ENCODE measurements at regions of chr17 and their contacts with region 1.

Region 1: DNA sequence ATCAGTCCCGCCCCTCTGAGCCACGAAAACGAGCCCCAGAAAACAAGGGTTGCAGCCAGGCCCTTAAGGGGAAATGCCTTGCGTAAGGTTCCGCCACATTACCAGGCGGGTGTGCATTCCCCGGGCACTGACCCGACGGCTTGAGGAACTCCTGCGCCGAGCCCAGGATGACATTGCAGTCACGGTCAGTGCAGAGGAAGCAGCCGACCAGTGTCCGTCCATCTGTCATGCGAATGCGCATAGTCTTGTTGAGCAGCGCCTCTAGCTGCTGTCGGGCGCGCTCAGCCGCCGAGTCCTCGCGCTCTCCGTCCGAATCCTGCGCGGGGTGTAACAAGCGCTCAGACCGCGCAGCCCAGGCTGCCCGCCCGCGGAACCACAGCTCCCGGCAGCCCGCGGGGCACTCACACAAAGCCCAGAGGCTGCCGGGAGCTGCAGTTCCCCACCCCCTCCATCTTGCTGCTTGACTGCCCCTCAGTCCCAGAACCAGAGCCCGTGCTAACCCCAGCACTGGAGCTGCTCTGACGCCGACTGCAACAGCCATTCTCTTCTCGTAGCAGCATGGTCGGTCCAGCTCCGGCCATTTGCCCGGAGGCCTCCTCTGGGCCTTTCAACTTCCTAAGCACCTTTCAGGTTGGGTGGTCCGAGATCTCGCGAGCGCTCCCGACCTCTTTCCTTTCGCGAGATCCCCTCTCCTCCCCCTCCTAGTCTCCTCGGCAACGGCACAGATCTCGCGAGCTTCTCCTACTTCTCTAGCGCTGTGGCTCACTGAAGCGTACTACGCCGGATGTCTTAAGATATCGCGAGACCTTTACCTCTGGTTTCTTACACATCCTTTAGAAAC is at the start of gene NAA38:
- DNase-seq: peak; percentile 97
- ATAC-seq: peak; percentile 91
- H3K4me3 Mint-ChIP-seq: no peak within 1 kb of the TSS
- H3K27ac Mint-ChIP-seq: no peak within 1 kb of the TSS
- H3K4me1 Mint-ChIP-seq: peaks cover 18% of the 10 kb centered on the region
- H3K27me3 Mint-ChIP-seq: no peaks in the 10 kb centered on the region
- total RNA-seq, gene NAA38: 64.7 to 79.8 TPM

Region 2: GRCh38 chr17:7583253-7584109 is 273.6 kb before region 1 on chr17 and contains the start of gene MPDU1:
- CTCF ChIA-PET with region 1: no interaction called
- POLR2A ChIA-PET with region 1: no interaction called
- intact Hi-C with region 1: loop called in 1 of 2 experiments (anchors 1 kb)
- DNase-seq: peak; percentile 98
- ATAC-seq: peak; percentile 77
- H3K4me3 Mint-ChIP-seq: peak within 1 kb of the TSS; percentile 82
- H3K27ac Mint-ChIP-seq: peak within 1 kb of the TSS; percentile 100
- H3K4me1 Mint-ChIP-seq: peaks cover 56% of the 10 kb centered on the region
- H3K27me3 Mint-ChIP-seq: no peaks in the 10 kb centered on the region
- total RNA-seq, gene MPDU1: 51.7 to 77.0 TPM

Region 3: DNA sequence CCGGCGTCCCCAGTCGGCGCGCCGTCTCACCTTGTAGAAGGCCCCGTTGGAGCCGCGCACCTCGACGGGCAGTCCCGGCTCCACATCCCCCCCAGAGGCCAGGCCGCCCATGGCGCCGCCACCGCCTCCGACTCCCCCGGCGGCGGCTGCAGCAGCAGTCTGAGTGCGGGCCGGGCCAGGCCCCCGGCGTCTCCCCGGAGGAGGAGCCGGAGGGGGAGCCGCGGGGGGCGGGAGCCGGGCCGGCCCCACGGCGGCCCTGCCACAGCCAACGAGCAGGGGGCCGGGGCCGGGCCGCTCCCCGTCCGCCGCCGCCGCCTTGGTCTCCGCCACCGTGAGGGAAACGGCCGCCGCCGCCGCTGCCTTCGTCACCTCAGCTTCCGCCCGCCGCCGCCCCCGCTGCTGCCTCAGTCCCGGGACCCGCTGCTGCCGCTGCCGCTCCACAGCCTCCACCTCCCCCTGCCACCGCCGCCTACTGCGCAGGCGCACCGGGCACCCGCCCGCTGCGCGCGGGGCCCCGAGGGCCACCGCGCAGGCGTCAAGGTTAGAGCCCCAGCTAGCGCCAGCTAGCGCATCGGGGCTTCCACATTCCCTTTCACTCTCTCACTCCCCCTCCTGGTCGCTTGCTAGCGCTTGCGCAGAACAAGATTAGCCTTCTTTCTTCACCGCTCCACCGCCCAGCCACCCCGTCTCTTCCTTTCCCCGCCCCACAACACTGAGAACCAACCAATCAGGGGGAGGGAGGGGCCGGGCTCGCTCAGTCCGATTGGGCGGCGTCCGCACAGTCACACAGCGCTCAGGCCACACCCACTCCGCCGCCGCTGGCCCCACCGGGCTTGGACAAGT is 242.5 kb before region 1 on chr17 and contains the start of gene FXR2:
- CTCF ChIA-PET with region 1: no interaction called
- POLR2A ChIA-PET with region 1: no interaction called
- intact Hi-C with region 1: loop called in 1 of 2 experiments (anchors 1 kb)
- DNase-seq: peak; percentile 100
- ATAC-seq: peak; percentile 95
- H3K4me3 Mint-ChIP-seq: peak within 1 kb of the TSS; percentile 85
- H3K27ac Mint-ChIP-seq: peak within 1 kb of the TSS; percentile 93
- H3K4me1 Mint-ChIP-seq: peaks cover 32% of the 10 kb centered on the region
- H3K27me3 Mint-ChIP-seq: no peaks in the 10 kb centered on the region
- total RNA-seq, gene FXR2: 35.6 to 50.2 TPM

Region 4: GRCh38 chr17:7809086-7809790 is 47.9 kb before region 1 on chr17:
- CTCF ChIA-PET with region 1: no interaction called
- POLR2A ChIA-PET with region 1: no interaction called
- intact Hi-C with region 1: no loop called
- DNase-seq: no peak
- ATAC-seq: no peak
- H3K4me3 Mint-ChIP-seq: no peak overlapping the region
- H3K27ac Mint-ChIP-seq: no peak overlapping the region
- H3K4me1 Mint-ChIP-seq: no peaks in the 10 kb centered on the region
- H3K27me3 Mint-ChIP-seq: peaks cover 3% of the 10 kb centered on the region

Region 5: DNA sequence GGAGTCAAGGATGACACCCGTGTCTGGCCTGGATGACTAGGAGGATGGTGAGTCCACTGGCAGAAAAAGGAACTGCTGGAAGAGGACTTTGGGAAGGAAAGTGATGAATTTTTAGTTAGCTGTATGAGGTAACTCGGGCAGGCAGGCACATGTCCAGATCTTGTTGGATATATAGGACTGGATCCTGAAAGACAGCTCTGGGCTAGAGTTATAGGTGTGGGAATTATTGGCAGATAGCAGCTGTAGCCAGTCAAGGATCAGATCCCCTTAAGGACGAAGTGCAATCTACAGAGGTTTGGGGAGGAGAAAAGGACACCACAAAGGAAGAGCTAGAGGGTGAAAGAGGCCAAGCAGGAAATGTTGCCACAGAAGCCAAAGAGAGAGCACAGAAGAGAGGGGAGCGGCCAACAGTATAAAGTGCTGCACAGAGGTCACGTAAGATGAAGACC is 10.8 kb after region 1 on chr17:
- CTCF ChIA-PET with region 1: interaction called, 32 read pairs
- POLR2A ChIA-PET with region 1: interaction called, 3 read pairs
- intact Hi-C with region 1: no loop called
- DNase-seq: no peak
- ATAC-seq: peak; percentile 53
- H3K4me3 Mint-ChIP-seq: no peak overlapping the region
- H3K27ac Mint-ChIP-seq: peak overlapping the region; percentile 49
- H3K4me1 Mint-ChIP-seq: peaks cover 23% of the 10 kb centered on the region
- H3K27me3 Mint-ChIP-seq: no peaks in the 10 kb centered on the region

Region 6: DNA sequence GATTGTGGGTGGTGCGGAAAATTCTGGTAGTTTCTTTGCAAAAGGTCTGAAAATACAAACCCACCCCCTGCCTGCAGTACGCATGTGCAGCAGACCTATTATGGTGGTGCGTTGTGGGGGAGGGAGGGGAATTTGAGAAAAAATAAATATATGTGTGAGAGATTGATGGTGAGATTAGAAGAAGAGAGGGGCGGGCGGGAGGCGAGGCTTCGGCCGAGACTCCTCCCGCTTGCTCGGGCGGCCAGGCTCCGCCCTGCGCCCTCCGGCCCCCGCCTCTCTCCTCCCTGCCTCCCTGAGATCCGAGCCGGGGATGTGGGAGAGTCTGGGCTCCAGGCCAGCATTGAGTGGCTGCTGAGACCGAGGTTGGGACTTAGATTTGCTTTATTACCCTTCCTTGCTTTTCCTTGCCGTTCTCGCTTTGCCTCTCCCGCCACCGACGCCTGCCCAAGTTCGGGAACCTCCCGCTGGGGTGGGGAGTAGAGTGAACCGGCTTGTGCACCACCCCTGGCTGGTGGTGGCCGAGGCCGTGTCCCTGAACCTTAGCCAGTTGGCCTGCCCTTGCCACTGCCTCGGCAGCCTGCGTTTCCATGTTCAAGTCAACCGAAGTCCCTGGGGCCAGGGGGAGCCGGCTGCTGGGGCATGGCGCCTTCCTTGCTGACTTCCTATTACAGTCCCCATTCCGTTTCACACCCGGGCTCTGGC is 30.5 kb after region 1 on chr17:
- CTCF ChIA-PET with region 1: interaction called, 7 read pairs
- POLR2A ChIA-PET with region 1: interaction called, 3 read pairs
- intact Hi-C with region 1: loop called (anchors 1 kb)
- DNase-seq: peak; percentile 94
- ATAC-seq: peak; percentile 79
- H3K4me3 Mint-ChIP-seq: no peak overlapping the region
- H3K27ac Mint-ChIP-seq: no peak overlapping the region
- H3K4me1 Mint-ChIP-seq: peaks cover 4% of the 10 kb centered on the region
- H3K27me3 Mint-ChIP-seq: no peaks in the 10 kb centered on the region

Region 7: DNA sequence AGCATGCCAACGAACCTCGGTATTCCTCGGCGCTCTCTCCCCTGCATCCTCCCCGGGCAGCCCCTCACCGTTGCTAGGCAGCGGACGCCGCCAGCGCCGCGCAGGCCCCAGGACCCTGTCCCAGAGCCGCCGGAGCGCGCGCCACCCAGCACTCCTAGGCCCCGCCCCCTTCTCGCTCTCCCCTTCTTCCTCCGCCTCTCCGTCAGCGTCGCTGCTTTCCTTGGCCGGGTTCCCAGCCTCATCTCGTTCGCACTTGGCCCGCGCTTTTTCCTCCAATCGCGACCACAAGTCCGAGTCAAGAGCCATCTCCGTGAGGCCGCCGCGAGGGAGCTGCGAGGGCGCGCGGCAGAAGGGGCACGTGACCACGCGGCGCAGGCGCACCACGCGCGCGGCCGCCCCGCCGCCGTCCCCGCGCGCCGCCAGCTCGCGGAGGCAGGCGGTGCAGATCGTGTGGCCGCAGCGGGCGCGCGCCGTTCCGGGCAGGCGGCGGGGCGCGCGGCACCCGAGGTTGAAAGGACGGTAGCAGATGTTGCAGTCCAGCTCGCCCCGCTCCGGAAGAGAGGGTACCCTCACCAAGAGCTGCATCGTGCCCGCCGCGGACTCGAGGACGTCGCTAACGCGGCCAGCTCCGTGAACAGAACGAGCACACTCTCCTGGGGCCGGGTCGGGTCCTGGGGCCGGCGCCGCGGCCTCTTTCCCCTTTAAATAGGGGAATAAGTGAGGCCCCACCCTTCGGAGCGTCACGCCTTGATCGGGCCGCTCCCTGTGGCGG is 58.7 kb after region 1 on chr17 and contains the start of gene RNF227:
- CTCF ChIA-PET with region 1: interaction called, 7 read pairs
- POLR2A ChIA-PET with region 1: interaction called, 3 read pairs
- intact Hi-C with region 1: loop called in 1 of 2 experiments (anchors 1 kb)
- DNase-seq: peak; percentile 95
- ATAC-seq: peak; percentile 88
- H3K4me3 Mint-ChIP-seq: peak within 1 kb of the TSS; percentile 86
- H3K27ac Mint-ChIP-seq: peak within 1 kb of the TSS; percentile 82
- H3K4me1 Mint-ChIP-seq: peaks cover 27% of the 10 kb centered on the region
- H3K27me3 Mint-ChIP-seq: no peaks in the 10 kb centered on the region
- total RNA-seq, gene RNF227: 3.8 to 5.6 TPM

Region 8: GRCh38 chr17:7947651-7948050 is 90.5 kb after region 1 on chr17:
- CTCF ChIA-PET with region 1: no interaction called
- POLR2A ChIA-PET with region 1: no interaction called
- intact Hi-C with region 1: no loop called
- DNase-seq: no peak
- ATAC-seq: no peak
- H3K4me3 Mint-ChIP-seq: no peak overlapping the region
- H3K27ac Mint-ChIP-seq: no peak overlapping the region
- H3K4me1 Mint-ChIP-seq: peaks cover 17% of the 10 kb centered on the region
- H3K27me3 Mint-ChIP-seq: no peaks in the 10 kb centered on the region